Head of caudate nucleus (tissue), 42 donors: ENCODE measurements at regions of chr10 and their contacts with region 1.

Region 1: DNA sequence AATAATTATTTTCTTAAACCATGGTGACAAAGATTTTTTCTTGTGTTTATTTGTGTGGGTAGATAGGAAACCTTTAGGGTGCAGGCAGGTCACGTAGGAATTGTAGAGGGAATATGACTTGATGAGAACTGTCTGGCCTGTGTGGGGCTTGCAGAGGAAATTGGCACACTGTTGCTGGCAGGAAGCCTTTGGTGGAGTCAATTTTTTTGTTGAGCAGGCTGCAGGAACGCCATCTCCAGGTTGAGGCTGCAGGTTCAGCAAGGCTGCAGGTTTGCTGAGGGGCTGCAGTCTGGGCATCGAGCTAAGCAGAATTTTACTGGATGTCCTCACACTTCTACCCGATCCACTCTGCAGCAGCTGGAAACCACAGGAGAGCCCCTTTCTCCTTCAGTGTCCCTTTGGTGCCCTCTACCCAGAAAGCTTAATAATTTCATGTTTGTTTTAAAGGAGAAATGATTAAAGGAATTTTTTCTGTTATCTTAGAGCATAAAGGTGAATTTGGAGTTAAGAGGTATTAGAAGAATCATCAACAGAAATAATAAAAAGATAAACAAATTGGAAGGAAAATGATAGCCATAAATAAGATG is 37.0 kb downstream of the TBC1D12 start:
- DNase-seq: peak in 4 of 42 donors; percentile 9 to 45 (median 15)

Region 2: DNA sequence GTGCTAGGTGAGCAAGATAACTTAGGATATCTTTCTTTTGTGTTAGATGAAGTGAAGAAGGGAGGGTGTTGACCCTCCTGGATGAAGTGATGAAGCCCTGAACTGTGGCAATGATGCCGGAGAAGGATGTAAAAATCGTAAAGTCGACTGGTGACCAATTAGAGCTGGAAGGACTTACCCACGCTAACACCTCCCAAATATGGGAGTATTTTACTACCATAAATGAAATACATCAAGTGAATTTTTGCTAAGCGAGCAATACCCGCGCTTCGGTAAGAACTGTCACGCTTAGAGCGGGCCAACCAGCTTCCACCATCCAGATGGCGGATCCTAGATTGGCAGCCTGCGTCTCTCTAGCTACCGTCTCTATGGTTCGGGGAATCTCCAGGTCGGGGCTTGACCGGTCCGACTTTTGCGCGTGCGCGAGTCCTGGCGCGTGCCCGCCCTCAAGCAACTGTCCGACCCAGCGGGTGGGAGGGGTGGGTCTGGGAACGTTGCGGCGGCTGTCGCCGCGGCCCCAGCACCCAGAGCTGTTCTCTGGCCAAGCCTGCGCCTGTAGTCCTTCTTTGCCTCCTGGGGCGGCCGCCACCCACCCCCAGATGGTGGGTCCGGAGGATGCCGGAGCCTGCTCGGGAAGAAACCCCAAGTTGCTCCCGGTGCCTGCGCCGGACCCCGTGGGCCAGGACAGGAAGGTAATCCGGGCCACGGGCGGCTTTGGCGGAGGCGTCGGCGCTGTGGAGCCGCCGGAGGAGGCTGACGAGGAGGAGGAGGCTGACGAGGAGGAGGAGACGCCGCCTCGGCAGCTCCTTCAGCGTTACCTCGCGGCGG is 37.1 kb before region 1 on chr10 and contains the start of gene TBC1D12:
- intact Hi-C with region 1: loop called (anchors 5 kb)
- DNase-seq: peak; percentile 92 to 98 (median 96)

Region 3: GRCh38 chr10:94785211-94785610 is 345.8 kb after region 1 on chr10:
- intact Hi-C with region 1: no loop called
- DNase-seq: no peak